ENCODE measurements at regions of chr16 and their contacts with region 1.

Region 1: GRCh38 chr16:4288148-4288921 is 15.5 kb upstream of the TFAP4 start:
- DNase-seq: peak; percentile 81
- H3K4me3 Mint-ChIP-seq: no peak overlapping the region
- H3K27ac Mint-ChIP-seq: no peak overlapping the region
- H3K4me1 Mint-ChIP-seq: peaks cover 10% of the 10 kb centered on the region
- H3K27me3 Mint-ChIP-seq: peaks cover 9% of the 10 kb centered on the region

Region 2: GRCh38 chr16:4301968-4302367 is 13.6 kb after region 1 on chr16:
- CTCF ChIA-PET with region 1: interaction called, 44 read pairs
- POLR2A ChIA-PET with region 1: no interaction called
- DNase-seq: no peak
- H3K4me3 Mint-ChIP-seq: no peak overlapping the region
- H3K27ac Mint-ChIP-seq: no peak overlapping the region
- H3K4me1 Mint-ChIP-seq: peaks cover 21% of the 10 kb centered on the region
- H3K27me3 Mint-ChIP-seq: no peaks in the 10 kb centered on the region

Region 3: DNA sequence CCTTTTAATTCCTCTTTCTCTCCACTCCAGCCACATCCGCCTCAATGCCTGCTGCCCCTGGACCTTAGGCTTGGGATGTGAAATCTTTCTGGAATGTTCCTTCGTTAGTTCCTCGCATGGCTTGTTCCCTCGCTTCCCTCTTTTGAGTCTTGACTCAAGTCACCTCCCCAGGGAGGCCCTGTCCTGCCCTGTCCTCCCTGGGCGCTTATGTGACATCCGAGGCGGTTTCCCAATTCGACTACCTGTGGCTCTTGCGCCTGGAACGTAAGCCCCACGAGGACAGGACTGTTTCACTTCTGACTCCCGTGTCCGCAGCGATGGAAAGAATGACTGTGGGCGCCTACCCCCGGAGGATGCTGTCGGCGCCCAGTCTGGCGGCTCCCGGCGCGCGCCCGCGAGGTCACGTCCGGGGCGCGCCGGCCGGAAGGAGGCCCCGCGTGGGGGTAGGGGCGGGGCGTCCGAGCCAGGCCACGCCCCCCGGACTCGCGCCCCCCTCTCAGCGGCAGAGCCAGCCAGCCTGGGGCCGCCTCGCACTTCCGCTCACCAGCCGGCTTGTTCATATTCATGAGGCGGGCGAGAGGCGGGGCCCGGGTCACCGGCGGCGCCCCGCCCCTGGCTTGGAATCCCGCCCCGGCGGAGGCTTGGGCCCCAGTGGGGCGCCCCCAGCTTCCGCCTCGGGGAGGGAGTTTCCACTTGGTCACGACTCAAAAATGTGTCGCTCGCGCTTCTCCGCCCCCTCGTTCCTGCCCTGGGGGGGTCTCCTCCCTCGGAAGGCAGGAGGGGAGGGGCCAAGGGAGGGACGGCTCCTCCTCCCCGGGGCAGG is 19.1 kb after region 1 on chr16:
- CTCF ChIA-PET with region 1: interaction called, 44 read pairs
- POLR2A ChIA-PET with region 1: no interaction called
- DNase-seq: peak; percentile 97
- H3K4me3 Mint-ChIP-seq: peak overlapping the region; percentile 93
- H3K27ac Mint-ChIP-seq: peak overlapping the region; percentile 92
- H3K4me1 Mint-ChIP-seq: peaks cover 30% of the 10 kb centered on the region
- H3K27me3 Mint-ChIP-seq: no peaks in the 10 kb centered on the region

Region 4: GRCh38 chr16:4330277-4330874 is 42.0 kb after region 1 on chr16:
- CTCF ChIA-PET with region 1: interaction called, 65 read pairs
- POLR2A ChIA-PET with region 1: no interaction called
- DNase-seq: peak; percentile 75
- H3K4me3 Mint-ChIP-seq: no peak overlapping the region
- H3K27ac Mint-ChIP-seq: no peak overlapping the region
- H3K4me1 Mint-ChIP-seq: no peaks in the 10 kb centered on the region
- H3K27me3 Mint-ChIP-seq: peaks cover 15% of the 10 kb centered on the region

Region 5: GRCh38 chr16:4402439-4403132 is 114.3 kb after region 1 on chr16:
- CTCF ChIA-PET with region 1: interaction called, 11 read pairs
- POLR2A ChIA-PET with region 1: no interaction called
- DNase-seq: peak; percentile 63
- H3K4me3 Mint-ChIP-seq: no peak overlapping the region
- H3K27ac Mint-ChIP-seq: no peak overlapping the region
- H3K4me1 Mint-ChIP-seq: peaks cover 12% of the 10 kb centered on the region
- H3K27me3 Mint-ChIP-seq: no peaks in the 10 kb centered on the region

Measured in activated CD4-positive, alpha-beta memory T cell treated with anti-CD3 and anti-CD28 coated beads, Interleukin-2, amount 10 ng/mL, durations not matched to agents 7 days and 5 days (primary cell).